Activated CD8-positive, alpha-beta T cell treated with anti-CD3 and anti-CD28 coated beads, Interleukin-2, amount 10 ng/mL, durations not matched to agents 7 days and 5 days (primary cell): ENCODE measurements at regions of chr11 and their contacts with region 1.

Region 1: DNA sequence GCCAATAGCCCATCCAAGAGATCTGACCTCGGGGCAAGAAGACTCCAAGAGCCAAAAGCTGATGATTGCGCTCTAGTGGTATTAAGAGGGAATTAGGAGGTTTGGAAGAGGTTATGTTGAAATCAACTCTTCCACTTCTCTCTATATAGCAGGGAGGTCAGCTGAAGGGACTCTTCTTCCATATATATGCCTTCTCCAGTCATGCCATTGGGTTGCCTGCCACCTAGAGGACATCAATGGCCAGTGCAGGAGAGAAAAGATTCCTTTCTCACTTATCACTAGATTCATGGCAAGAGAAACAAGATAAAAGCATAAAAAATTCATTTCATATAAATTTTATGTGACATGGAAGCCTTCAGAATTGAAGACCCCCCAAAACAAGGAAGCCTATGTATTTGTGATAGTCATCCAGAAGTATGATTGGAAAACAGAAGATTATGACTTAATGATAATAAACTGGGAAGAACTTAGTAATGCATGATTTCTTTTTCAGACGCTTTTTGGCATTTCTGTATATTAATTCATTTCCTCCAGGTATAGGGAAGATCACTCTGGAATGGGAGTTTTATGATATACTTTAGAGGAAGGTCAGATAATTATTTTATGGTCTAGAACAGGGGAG is 435.1 kb upstream of the DDI1 start:
- DNase-seq: peak; percentile 46
- ATAC-seq: peak; percentile 51
- H3K4me3 Mint-ChIP-seq: no peak overlapping the region
- H3K27ac Mint-ChIP-seq: no peak overlapping the region
- H3K4me1 Mint-ChIP-seq: no peaks in the 10 kb centered on the region
- H3K27me3 Mint-ChIP-seq: peaks cover 13% of the 10 kb centered on the region

Region 2: DNA sequence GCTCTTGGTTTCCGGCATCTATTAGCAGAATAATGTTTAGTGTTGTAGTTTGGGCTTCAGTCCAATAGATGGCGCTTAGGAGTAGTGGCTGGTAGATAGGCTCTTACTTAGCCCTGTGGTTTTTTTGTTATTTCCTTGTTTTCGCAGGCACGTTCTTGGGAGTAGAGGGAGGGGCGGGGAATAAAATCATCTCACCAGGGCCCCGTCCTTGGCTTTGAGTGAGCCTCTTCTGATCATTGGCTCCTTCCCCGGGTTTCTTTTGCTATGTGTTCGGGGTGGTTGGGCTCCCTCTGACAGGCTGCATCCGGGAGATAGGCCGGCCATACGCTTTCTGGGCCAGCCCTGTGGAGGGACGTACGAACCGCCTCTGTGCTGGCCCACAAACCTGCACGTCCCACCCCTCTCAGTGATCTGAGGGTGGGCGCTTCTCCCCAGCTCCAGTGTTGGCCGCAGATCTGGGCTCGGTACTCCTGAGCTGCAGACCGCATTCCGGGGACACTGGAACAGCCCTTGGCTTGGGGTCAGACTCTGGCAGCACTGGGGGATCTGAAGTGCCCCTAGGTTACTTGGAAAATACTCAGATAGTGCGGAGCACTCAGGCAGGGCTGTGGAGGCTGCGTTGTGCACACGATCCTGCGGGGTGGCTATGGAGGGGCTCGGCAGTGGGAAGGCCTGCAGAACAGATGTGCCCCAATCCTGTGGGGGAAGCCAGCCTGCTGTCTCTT is 275.1 kb before region 1 on chr11:
- CTCF ChIA-PET with region 1: interaction called, 18 read pairs
- POLR2A ChIA-PET with region 1: no interaction called
- DNase-seq: peak; percentile 62
- ATAC-seq: peak; percentile 81
- H3K4me3 Mint-ChIP-seq: no peak overlapping the region
- H3K27ac Mint-ChIP-seq: no peak overlapping the region
- H3K4me1 Mint-ChIP-seq: peaks cover 7% of the 10 kb centered on the region
- H3K27me3 Mint-ChIP-seq: peaks cover 4% of the 10 kb centered on the region